WTC11 (cell line): ENCODE measurements at regions of chr1 and their contacts with region 1.

Region 1: GRCh38 chr1:114033216-114033706 is 54.0 kb downstream of the OLFML3 start:
- DNase-seq: peak; percentile 56
- ATAC-seq: peak; percentile 69
- H3K4me3 Mint-ChIP-seq: no peak overlapping the region
- H3K27ac Mint-ChIP-seq: no peak overlapping the region
- H3K4me1 Mint-ChIP-seq: peaks cover 26% of the 10 kb centered on the region
- H3K27me3 Mint-ChIP-seq: no peaks in the 10 kb centered on the region
- CTCF ChIP-seq: peak; percentile 58; the same call in 1 of the 2 replicates

Region 2: DNA sequence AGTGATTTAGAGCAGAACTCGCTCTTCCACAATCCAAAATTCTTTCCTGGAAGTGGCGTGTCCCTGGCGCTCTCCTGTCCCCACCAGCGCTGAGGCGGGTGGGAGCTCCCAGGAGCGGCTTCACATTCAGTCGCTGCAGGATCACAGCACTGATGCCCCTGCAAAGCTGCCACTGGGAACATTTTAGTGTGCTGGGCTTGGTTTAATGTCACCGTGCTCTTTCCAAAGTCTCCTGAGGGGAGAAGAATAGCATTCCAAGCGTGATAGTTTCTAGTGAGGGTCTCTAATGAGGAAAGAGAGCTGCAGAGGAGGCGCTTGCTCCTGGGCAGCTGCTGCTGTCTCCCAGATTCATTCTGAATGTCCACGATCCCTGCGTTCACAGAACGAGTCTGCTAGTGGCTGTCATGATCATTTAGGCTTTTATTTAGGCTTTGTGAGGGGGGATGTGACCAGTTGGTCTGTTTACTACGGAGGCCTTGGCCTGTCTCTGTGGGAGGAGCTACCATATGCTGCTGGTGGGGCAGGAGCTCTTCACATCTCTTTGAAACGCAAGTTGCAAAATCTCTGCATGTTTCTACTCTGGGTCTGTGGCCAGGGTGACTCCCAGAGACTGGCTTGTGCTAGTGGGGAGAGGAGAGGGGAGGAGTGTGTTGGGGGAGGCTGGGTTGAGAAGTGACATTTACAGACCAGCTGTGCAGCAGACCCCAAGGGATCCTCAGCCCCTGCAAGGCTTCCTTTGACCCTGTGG is 30.6 kb before region 1 on chr1:
- CTCF ChIA-PET with region 1: interaction called, 21 read pairs
- POLR2A ChIA-PET with region 1: no interaction called
- DNase-seq: no peak
- ATAC-seq: peak; percentile 67
- H3K4me3 Mint-ChIP-seq: no peak overlapping the region
- H3K27ac Mint-ChIP-seq: peak overlapping the region; percentile 16
- H3K4me1 Mint-ChIP-seq: peaks cover 61% of the 10 kb centered on the region
- H3K27me3 Mint-ChIP-seq: peaks cover 23% of the 10 kb centered on the region
- CTCF ChIP-seq: no peak

Region 3: GRCh38 chr1:114053604-114054003 is 20.3 kb after region 1 on chr1:
- CTCF ChIA-PET with region 1: interaction called, 3 read pairs
- POLR2A ChIA-PET with region 1: interaction called, 11 read pairs
- DNase-seq: no peak
- ATAC-seq: peak; percentile 42
- H3K4me3 Mint-ChIP-seq: no peak overlapping the region
- H3K27ac Mint-ChIP-seq: no peak overlapping the region
- H3K4me1 Mint-ChIP-seq: peaks cover 17% of the 10 kb centered on the region
- H3K27me3 Mint-ChIP-seq: peaks cover 50% of the 10 kb centered on the region
- CTCF ChIP-seq: no peak